ENCODE measurements at regions of chr1 and their contacts with region 1.

Region 1: DNA sequence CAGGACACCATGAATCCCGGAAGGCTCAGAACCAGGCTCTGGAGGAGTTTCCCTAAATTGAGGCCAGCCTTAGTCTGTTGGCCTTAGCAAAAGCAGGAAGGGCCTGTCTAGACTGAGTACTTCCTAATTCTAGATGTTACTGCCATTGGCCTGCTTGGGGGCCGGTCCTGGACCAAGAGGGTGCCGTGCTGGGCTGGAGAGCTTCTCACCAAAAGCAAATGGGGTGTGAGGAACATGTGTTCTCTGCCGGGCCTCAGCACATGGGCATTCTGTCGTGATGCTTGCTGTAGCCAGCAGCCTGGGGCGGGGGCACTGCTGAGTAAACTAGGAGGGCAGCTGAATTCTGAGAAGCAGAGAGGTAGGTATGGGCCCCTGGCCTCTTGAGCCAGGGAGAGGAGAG is 35.7 kb upstream of the MAN1C1 start:
- DNase-seq: no peak
- H3K4me3 ChIP-seq: no peak overlapping the region
- H3K27ac ChIP-seq: no peak overlapping the region
- H3K4me1 ChIP-seq: peaks cover 0 to 13% (median 10%) of the 10 kb centered on the region in 4 experiments; a peak in 5 of 7 replicates
- H3K27me3 ChIP-seq: no peaks in the 10 kb centered on the region; a peak in 2 of 7 replicates
- CTCF ChIP-seq: peak in 2 of 3 experiments; percentile 27 to 38; a peak in 2 of 4 replicates
- EP300 ChIP-seq: no peak
- POLR2A ChIP-seq: no peak
- RAD21 ChIP-seq: peak; percentile 12 to 33; a peak in 2 of 4 replicates

Region 2: DNA sequence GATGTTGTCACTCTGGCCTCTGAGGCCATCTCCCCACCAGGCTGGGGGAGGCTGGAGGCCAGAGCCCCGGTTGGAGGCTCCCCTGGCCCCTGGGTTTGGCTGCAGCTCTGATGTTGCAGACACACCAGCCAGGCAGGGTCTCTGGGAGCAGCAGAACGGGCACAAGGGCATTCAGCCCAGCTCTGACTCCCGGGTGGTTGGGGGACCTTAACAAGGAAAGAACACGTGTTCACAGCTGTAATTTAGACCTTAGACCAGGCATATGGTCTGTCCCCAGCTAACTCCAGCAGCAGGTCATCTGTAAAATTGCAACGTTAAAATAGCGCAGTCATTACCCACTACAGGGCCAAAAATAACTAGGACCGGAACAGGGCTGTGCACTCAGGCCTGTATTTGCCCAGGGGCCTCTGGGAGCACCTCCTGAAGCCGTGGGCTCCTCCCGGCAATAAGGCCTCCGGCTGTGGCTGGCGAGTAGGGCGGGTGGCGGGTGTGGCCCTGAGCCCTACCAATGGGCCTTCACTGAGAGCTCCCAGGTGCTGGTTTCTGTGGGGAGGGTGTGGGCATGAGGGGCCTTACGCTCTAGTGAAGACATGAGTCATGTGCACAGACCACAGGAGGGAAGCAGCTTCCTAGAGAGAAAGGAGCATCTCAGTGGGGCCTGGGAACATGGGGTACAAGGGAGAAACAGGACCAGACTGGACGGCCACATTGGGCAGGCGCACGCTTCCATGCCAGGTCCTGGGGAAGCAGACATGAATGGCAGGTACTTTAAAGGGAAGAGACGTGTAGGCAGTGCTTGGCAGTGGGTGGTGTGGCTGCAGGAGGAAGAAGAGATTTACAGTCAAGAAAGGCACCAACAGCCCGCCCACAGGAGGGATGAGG is 31.4 kb before region 1 on chr1:
- CTCF ChIA-PET with region 1: interaction called, 16 read pairs
- POLR2A ChIA-PET with region 1: no interaction called
- DNase-seq: no peak
- H3K4me3 ChIP-seq: no peak overlapping the region
- H3K27ac ChIP-seq: no peak overlapping the region
- H3K4me1 ChIP-seq: peaks cover 0 to 4% (median 3%) of the 10 kb centered on the region in 4 experiments; a peak in 4 of 7 replicates
- H3K27me3 ChIP-seq: peaks cover 0 to 2% (median 2%) of the 10 kb centered on the region in 4 experiments; a peak in 5 of 7 replicates
- CTCF ChIP-seq: no peak
- EP300 ChIP-seq: no peak
- POLR2A ChIP-seq: no peak
- RAD21 ChIP-seq: no peak

Region 3: DNA sequence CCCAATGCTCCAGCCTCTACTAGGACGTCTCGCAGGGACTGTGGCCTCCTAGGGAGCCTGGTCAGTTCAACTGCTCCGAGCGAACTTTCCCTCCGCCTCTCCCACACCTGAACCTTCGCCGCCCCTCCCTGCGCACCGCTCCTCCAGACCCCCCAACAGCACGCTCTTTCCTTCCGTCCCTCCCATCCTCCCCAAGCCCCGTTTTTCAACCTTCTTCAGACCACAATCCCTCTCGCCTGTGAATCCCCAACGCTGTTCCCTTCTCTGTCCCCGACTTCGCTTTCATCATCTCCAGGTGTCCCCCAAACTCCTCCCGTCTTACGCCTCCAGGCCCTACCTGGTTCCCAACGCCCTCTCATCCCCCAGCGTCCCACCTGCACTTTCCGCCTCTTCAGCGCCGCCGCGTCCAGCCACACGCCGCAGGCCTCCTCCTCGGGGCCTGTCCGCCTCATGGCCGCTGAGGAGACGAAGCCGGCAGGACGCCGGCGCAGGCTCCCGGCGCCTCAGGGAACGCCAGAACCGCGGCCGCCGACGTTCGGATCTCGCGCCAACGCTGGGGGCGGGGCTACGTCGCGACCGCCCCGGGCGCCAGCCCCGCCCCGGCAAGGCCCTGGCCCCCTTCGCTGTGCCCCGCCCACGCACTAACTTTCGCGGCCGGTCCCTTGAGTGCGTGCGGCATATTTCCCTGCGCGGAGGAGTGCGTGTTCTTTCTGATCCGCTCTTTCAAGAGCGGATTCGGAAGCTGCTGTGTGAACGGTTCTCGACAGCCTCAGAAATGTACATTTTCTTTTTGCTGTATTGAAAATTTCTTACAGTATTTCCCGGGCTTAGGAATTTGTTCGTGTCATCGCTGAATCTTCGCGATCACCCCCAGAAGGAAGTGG is 278.2 kb after region 1 on chr1 and contains the start of gene AUNIP:
- CTCF ChIA-PET with region 1: no interaction called
- POLR2A ChIA-PET with region 1: no interaction called
- DNase-seq: peak in 1 of 2 experiments; percentile 84
- H3K4me3 ChIP-seq: peak within 1 kb of the TSS; percentile 76 to 94 (median 86)
- H3K27ac ChIP-seq: peak within 1 kb of the TSS; percentile 89
- H3K4me1 ChIP-seq: no peaks in the 10 kb centered on the region; a peak in 2 of 7 replicates
- H3K27me3 ChIP-seq: no peaks in the 10 kb centered on the region
- CTCF ChIP-seq: no peak
- EP300 ChIP-seq: no peak
- POLR2A ChIP-seq: peak; percentile 88 to 94
- RAD21 ChIP-seq: no peak
- total RNA-seq, gene AUNIP: 22.9 and 23.2 TPM in 2 replicates

Region 4: GRCh38 chr1:26302733-26303405 is 721.9 kb after region 1 on chr1:
- CTCF ChIA-PET with region 1: no interaction called
- POLR2A ChIA-PET with region 1: no interaction called
- DNase-seq: no peak
- H3K4me3 ChIP-seq: no peak overlapping the region
- H3K27ac ChIP-seq: no peak overlapping the region
- H3K4me1 ChIP-seq: peaks cover 0 to 5% (median 2%) of the 10 kb centered on the region in 4 experiments; a peak in 3 of 7 replicates
- H3K27me3 ChIP-seq: no peaks in the 10 kb centered on the region
- CTCF ChIP-seq: no peak
- EP300 ChIP-seq: no peak
- POLR2A ChIP-seq: no peak
- RAD21 ChIP-seq: no peak

Measured in H1 (cell line).